Testis (tissue), 5 donors: ENCODE measurements at regions of chr5 and their contacts with region 1.

Region 1: DNA sequence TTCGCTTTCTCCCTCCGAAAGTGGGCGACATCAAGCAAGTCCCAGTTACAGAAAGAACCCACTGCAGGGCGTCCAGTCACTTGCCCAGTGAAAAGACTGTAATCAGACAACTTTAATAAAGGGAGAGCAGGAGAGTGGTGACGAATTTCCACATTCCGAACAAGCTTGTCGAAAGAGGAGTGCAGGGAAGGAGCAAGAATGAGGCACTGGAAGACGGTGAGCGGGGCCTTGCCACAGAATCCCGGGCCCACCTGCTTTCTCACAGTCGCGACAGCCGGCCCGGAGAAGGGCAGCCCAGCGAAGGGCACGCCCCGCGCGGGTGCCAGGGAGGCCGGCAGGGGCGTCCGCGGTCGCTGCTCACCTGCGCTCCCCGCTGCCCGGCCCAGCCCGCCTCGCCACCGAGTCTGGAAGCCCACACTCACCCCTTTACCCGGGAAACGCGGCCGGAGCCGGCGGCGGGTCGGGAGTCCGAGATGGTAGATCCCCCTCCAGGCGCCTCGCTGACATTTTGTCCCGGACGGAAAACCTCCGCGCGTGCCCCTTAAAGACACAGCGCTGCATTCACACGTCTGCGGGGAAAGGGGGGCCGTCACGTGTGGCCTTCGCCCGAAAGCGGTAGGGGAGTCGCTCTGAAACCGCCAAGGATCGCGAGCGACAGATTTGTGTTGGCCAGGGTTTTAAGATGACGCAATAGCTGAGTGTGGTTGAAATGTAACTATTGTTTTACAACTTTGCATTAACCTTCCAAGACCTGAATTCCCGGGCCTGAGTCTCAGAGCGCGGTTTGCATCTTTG is at the start of gene ZBED3:
- DNase-seq: peak; percentile 84
- H3K4me3 ChIP-seq: peak within 1 kb of the TSS; percentile 75 to 92
- H3K27ac ChIP-seq: peak within 1 kb of the TSS; percentile 92 to 96
- H3K4me1 ChIP-seq: peaks cover 7% of the 10 kb centered on the region
- H3K27me3 ChIP-seq: no peaks in the 10 kb centered on the region
- CTCF ChIP-seq: no peak
- POLR2A ChIP-seq: no peak
- total RNA-seq, gene ZBED3: 7.9 to 14.5 TPM

Region 2: DNA sequence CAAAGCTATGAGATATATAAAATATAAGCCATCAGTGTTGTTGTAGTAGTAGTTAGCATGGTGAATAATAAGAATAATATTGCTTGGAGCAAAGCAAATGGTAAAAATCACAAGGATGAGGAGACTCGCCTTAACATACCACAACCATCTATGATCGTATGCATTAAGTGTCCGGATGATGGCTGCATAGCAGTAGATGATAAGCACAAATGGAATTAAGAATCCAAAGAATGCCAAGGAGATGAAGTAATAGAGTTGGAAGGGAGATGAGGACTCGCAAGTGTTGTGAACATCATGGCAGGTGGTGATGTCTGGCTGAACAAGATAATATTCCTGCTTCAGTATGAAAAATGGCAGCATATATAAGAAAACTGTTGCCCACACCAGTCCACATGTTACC is 469.2 kb before region 1 on chr5:
- intact Hi-C with region 1: no loop called
- DNase-seq: no peak
- H3K4me3 ChIP-seq: no peak overlapping the region
- H3K27ac ChIP-seq: no peak overlapping the region
- H3K4me1 ChIP-seq: no peaks in the 10 kb centered on the region
- H3K27me3 ChIP-seq: no peaks in the 10 kb centered on the region
- CTCF ChIP-seq: no peak
- POLR2A ChIP-seq: no peak

Region 3: DNA sequence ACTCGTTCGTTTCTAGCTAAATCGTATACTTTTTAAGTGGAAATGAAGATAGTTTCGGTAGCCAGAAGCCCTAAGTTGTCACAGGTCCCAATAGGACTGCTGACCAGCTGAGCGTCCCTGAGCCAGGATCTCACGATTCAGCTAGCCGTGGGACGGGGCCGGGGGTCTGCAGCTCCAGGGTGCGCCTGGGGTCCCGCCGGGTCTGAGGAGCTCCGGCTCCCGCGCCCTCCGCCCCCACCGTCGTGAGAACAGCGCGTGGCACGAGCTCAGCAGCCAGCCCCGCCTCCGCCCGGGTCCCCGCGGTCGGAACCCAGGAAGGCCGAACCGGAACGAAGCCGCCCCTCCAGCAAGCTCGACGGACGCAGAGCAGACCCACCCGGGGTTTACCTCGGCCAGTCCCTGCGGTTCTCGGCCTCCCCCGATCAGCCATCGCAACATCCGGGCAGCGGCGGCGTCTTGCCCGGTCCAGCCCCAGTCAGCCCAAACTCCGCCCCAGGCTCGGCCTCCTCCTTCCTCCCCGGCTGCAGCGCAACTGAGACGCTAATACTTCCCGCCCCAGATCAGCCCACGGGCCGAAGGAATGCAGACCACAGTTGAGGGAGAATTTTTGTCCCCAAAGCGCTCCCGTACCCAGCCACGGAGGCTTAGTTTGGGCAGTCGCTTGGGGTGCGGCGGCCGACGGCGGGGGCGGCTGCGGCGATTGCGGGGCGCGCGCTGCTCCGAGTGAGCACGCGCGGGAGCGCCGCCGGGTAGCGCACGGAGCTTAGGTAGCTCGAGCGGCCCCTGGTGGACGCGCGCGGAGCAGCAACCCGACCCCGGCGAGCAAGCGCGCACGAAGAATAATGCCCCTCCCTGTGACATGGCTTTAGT is 405.1 kb after region 1 on chr5 and contains the start of gene WDR41:
- intact Hi-C with region 1: loop called (anchors 5 kb)
- DNase-seq: peak; percentile 94
- H3K4me3 ChIP-seq: peak within 1 kb of the TSS; percentile 84 to 97
- H3K27ac ChIP-seq: peak within 1 kb of the TSS; percentile 97 to 99
- H3K4me1 ChIP-seq: peaks cover 8% of the 10 kb centered on the region
- H3K27me3 ChIP-seq: no peaks in the 10 kb centered on the region
- CTCF ChIP-seq: peak; percentile 95 to 98 (median 96)
- POLR2A ChIP-seq: no peak
- total RNA-seq, gene WDR41: 33.9 to 46.5 TPM